ENCODE measurements at regions of chr20 and their contacts with region 1.

Region 1: DNA sequence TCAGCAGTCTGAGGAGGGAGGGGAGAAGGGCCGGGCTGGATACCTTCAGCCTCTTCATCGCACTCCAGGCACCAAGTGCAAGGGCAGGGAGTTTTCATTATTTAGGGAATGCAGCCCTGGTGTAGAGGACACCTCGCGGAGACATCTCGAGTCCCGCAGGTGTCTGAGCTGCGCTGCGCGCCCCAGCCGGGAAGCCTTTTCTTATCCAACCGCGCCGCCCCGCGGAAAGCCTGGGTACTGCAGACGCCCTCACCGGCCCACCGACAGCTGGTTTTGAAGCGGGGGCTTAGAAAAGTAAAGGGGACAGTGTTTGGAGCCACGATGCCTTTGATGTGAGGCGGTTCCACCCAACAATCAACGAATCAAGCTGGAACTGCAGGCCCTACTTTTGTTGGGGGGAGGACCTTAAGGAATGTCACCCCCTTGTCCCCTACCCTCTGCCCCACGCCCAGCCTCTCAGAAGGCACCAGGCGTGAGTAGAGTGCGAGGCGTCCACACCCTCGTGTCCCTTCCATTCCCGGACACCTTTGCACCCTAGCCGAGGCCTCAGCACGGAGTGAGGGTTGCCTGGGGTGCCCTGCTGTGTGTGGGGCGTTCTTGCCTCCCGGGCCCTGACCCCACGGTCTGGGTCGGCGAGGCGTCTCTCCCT is 8.6 kb downstream of the NKX2-2 start:
- DNase-seq: peak; percentile 69
- H3K4me3 ChIP-seq: peak overlapping the region; percentile 59
- H3K27ac ChIP-seq: no peak overlapping the region
- H3K4me1 ChIP-seq: no peaks in the 10 kb centered on the region
- H3K27me3 ChIP-seq: peaks cover 56% of the 10 kb centered on the region

Region 2: GRCh38 chr20:20843982-20844381 is 661.3 kb before region 1 on chr20:
- in situ Hi-C with region 1: loop called (anchors 10 kb)
- DNase-seq: no peak
- H3K4me3 ChIP-seq: no peak overlapping the region
- H3K27ac ChIP-seq: no peak overlapping the region
- H3K4me1 ChIP-seq: no peaks in the 10 kb centered on the region
- H3K27me3 ChIP-seq: peaks cover 5% of the 10 kb centered on the region; the same call in 1 of the 2 replicates

Region 3: DNA sequence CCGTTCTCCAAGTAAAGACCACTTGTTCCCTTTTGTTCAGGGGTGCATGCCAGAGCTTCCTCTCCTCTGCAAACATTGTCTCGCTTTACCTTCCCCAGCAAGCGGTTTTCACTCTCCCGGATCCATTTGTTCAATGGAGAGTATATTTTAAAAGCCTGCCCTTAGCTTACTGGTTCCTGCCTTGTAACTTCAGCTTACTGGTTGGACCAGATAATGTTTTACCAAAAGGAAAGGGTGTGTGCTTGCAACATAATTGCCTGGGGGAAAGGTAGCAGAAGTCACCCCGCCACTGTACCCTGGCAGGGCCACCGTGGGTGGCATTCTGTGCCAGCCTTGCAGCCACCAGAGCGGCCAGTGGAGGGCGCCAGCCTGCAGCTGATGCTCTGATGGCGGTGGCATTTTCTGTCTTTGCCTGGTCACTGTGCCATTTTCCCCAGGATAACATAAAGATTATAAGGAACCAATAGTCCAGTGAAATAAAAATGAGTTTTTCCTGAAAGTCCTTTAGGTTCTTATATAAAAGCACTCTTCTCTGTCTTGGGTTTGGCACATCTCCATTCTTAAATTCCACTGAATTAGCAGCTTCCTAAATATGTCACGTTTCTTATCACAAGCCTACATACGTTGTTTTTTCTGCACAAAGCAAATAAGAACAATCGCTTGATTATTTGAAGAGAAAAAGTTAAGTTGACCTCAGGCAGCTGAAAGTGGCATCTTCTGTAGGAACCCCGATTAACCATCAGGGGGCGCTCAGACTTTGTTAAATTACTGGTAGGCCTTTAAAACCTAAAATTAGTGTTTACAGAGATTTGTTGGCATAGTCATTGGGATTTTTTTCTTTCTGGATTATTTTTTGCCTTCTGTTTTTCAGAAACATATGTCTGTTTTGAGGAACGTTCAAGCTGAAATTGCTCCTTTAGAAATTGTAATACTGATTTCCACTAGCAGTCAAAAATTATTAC is 269.5 kb before region 1 on chr20:
- in situ Hi-C with region 1: loop called (anchors 10 kb)
- DNase-seq: peak; percentile 73
- H3K4me3 ChIP-seq: no peak overlapping the region
- H3K27ac ChIP-seq: no peak overlapping the region
- H3K4me1 ChIP-seq: no peaks in the 10 kb centered on the region
- H3K27me3 ChIP-seq: no peaks in the 10 kb centered on the region